Naive thymus-derived CD4-positive, alpha-beta T cell (primary cell): ENCODE measurements at regions of chr19 and their contacts with region 1.

Region 1: GRCh38 chr19:40190891-40191835 is at the start of gene MAP3K10:
- DNase-seq: peak; percentile 50 to 84 (median 67)
- ATAC-seq: peak; percentile 95
- H3K4me3 ChIP-seq: peak within 1 kb of the TSS; percentile 97
- H3K4me3 Mint-ChIP-seq: peak within 1 kb of the TSS; percentile 76 to 92 (median 86)
- H3K27ac ChIP-seq: peak within 1 kb of the TSS; percentile 86
- H3K27ac Mint-ChIP-seq: peak within 1 kb of the TSS; percentile 53 to 94 (median 87)
- H3K4me1 ChIP-seq: peaks cover 5 to 10% of the 10 kb centered on the region in 2 donors
- H3K4me1 Mint-ChIP-seq: peaks cover 14 to 39% (median 30%) of the 10 kb centered on the region in 7 donors
- H3K27me3 ChIP-seq: no peaks in the 10 kb centered on the region
- H3K27me3 Mint-ChIP-seq: no peaks in the 10 kb centered on the region
- total RNA-seq, gene MAP3K10: 22.3 to 31.5 (median 27.0) TPM

Region 2: GRCh38 chr19:39824143-39825092 is 366.7 kb before region 1 on chr19:
- CTCF ChIA-PET with region 1: no interaction called
- POLR2A ChIA-PET with region 1: no interaction called
- intact Hi-C with region 1: loop called (anchors 2 kb)
- DNase-seq: peak; percentile 55 to 92 (median 86)
- ATAC-seq: peak; percentile 98
- H3K4me3 ChIP-seq: peak overlapping the region; percentile 85
- H3K4me3 Mint-ChIP-seq: no peak overlapping the region
- H3K27ac ChIP-seq: peak overlapping the region; percentile 72
- H3K27ac Mint-ChIP-seq: no peak overlapping the region
- H3K4me1 ChIP-seq: peaks cover 14 to 19% of the 10 kb centered on the region in 2 donors
- H3K4me1 Mint-ChIP-seq: peaks cover 0 to 19% (median 10%) of the 10 kb centered on the region in 7 donors
- H3K27me3 ChIP-seq: no peaks in the 10 kb centered on the region
- H3K27me3 Mint-ChIP-seq: no peaks in the 10 kb centered on the region

Region 3: DNA sequence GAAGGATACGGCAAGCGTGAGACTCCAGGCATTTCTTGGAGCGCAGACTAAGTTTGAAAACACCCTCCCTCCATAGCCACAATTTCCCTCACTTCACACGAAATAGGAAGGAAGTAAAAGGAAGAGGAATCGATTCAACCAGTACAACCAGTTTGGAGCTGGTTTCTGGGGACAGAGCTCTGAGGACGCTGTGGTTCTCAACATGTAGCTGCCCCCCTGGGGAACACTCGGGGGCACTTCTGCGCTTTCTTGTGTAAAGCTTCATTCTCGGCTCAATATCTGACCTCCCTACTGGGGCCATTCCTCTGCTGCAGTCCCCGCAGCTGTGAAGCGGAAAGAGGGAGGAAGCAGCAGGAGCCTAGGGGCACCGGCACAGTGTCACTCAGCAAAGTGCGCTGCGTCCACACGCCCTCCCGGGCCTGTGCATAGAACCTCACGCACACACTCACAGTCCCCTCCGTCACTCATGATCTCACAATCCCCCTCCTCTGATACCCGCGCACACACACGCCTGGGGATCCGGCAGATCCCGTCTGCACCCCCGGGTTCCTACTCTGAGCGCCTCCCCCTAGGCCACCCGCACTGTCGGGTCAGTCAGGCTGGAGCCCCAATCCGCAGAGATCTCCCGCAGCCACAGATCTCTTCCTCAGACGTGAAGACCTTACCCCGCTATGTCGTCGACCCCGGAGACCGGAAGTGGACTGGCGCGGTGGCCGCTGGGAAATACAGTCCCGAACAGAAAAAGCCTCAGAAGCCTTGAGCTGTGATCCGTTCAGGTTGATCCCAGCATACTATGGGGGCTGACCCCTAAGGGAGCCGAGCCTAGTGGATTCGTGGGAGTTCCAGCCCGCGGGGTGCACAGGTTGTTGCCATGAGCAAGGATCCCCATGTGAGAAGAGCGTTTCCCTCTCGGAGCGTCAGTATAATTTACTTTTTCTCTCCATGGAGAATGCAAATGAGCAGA is 100.6 kb before region 1 on chr19 and contains the start of gene ZNF780A:
- CTCF ChIA-PET with region 1: no interaction called
- POLR2A ChIA-PET with region 1: interaction called, 3 read pairs
- intact Hi-C with region 1: loop called in 1 of 2 experiments (anchors 1 kb)
- DNase-seq: peak; percentile 59 to 83 (median 81)
- ATAC-seq: peak; percentile 94
- H3K4me3 ChIP-seq: peak within 1 kb of the TSS; percentile 94
- H3K4me3 Mint-ChIP-seq: peak within 1 kb of the TSS; percentile 93 to 100 (median 100)
- H3K27ac ChIP-seq: peak within 1 kb of the TSS; percentile 95
- H3K27ac Mint-ChIP-seq: peak within 1 kb of the TSS; percentile 99 to 100 (median 100)
- H3K4me1 ChIP-seq: peaks cover 16 to 18% of the 10 kb centered on the region in 2 donors
- H3K4me1 Mint-ChIP-seq: peaks cover 33 to 49% (median 44%) of the 10 kb centered on the region in 7 donors
- H3K27me3 ChIP-seq: no peaks in the 10 kb centered on the region
- H3K27me3 Mint-ChIP-seq: peaks cover 8 to 11% (median 9%) of the 10 kb centered on the region in 5 donors
- total RNA-seq, gene ZNF780A: 13.9 to 49.5 (median 22.1) TPM

Region 4: DNA sequence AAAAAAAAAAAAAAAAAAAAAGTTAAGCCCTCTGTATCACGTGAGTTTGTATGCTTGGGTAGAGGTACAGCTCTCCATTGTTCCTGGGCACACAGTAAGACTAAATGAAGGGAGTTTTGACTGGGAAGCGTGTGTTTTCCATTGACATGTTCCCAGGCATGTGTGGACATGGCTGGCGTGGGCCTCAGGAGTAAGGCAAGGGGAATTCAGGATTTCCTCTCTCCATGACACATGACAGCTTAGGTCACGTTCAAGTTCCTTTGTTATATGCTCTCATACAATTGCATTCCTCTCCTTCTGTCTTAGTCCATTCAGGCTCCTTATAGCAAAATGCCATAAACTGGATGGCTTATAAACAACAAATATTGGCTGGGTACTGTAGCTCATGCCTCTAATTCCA is 17.1 kb before region 1 on chr19:
- CTCF ChIA-PET with region 1: no interaction called
- POLR2A ChIA-PET with region 1: no interaction called
- intact Hi-C with region 1: no loop called
- DNase-seq: no peak
- ATAC-seq: no peak
- H3K4me3 ChIP-seq: no peak overlapping the region
- H3K4me3 Mint-ChIP-seq: no peak overlapping the region
- H3K27ac ChIP-seq: no peak overlapping the region
- H3K27ac Mint-ChIP-seq: no peak overlapping the region
- H3K4me1 ChIP-seq: no peaks in the 10 kb centered on the region
- H3K4me1 Mint-ChIP-seq: peaks cover 0 to 1% (median 0%) of the 10 kb centered on the region in 7 donors
- H3K27me3 ChIP-seq: no peaks in the 10 kb centered on the region
- H3K27me3 Mint-ChIP-seq: peaks cover 0 to 9% (median 4%) of the 10 kb centered on the region in 5 donors

Region 5: GRCh38 chr19:40221858-40222837 is 31.0 kb after region 1 on chr19:
- CTCF ChIA-PET with region 1: no interaction called
- POLR2A ChIA-PET with region 1: no interaction called
- intact Hi-C with region 1: loop called (anchors 1 kb)
- DNase-seq: peak; percentile 54 to 86 (median 82)
- ATAC-seq: peak; percentile 92
- H3K4me3 ChIP-seq: no peak overlapping the region
- H3K4me3 Mint-ChIP-seq: peak overlapping the region; percentile 16 to 85 (median 68)
- H3K27ac ChIP-seq: no peak overlapping the region
- H3K27ac Mint-ChIP-seq: peak overlapping the region; percentile 5 to 85 (median 58)
- H3K4me1 ChIP-seq: peaks cover 4 to 20% of the 10 kb centered on the region in 2 donors
- H3K4me1 Mint-ChIP-seq: peaks cover 12 to 30% (median 24%) of the 10 kb centered on the region in 7 donors
- H3K27me3 ChIP-seq: peaks cover 16 to 35% of the 10 kb centered on the region in 2 donors
- H3K27me3 Mint-ChIP-seq: peaks cover 49 to 70% (median 60%) of the 10 kb centered on the region in 5 donors

Region 6: GRCh38 chr19:40257057-40257517 is 65.9 kb after region 1 on chr19:
- CTCF ChIA-PET with region 1: no interaction called
- POLR2A ChIA-PET with region 1: no interaction called
- intact Hi-C with region 1: no loop called
- DNase-seq: no peak
- ATAC-seq: no peak
- H3K4me3 ChIP-seq: no peak overlapping the region
- H3K4me3 Mint-ChIP-seq: no peak overlapping the region
- H3K27ac ChIP-seq: no peak overlapping the region
- H3K27ac Mint-ChIP-seq: no peak overlapping the region
- H3K4me1 ChIP-seq: no peaks in the 10 kb centered on the region
- H3K4me1 Mint-ChIP-seq: peaks cover 6 to 45% (median 38%) of the 10 kb centered on the region in 7 donors
- H3K27me3 ChIP-seq: no peaks in the 10 kb centered on the region
- H3K27me3 Mint-ChIP-seq: no peaks in the 10 kb centered on the region